Lower leg skin (tissue), 4 donors: ENCODE measurements at regions of chr14 and their contacts with region 1.

Region 1: GRCh38 chr14:62654641-62655040 is 390.6 kb downstream of the KCNH5 start:
- DNase-seq: no peak
- H3K4me3 ChIP-seq: no peak overlapping the region
- CTCF ChIP-seq: no peak
- POLR2A ChIP-seq: no peak

Region 2: DNA sequence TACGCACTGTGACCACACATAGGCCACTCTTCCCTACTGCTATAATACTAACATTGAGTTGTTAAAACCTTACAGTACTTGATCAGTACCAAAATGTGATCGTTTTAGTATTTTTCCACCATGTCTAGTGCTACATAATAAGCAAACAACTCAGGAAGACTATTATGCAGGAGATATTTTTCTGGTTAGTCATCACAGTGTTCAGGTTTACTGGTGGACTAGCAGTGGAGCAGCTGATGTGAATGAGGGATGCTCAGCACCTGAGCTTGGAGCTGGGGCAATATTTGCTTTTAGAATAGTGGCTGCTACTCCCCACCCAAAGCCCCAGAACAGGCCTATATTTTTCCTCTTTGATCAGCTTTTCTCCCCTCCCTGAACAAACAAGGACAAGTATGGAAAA is 122.5 kb before region 1 on chr14:
- intact Hi-C with region 1: no loop called
- DNase-seq: no peak
- H3K4me3 ChIP-seq: no peak overlapping the region
- CTCF ChIP-seq: no peak
- POLR2A ChIP-seq: no peak

Region 3: DNA sequence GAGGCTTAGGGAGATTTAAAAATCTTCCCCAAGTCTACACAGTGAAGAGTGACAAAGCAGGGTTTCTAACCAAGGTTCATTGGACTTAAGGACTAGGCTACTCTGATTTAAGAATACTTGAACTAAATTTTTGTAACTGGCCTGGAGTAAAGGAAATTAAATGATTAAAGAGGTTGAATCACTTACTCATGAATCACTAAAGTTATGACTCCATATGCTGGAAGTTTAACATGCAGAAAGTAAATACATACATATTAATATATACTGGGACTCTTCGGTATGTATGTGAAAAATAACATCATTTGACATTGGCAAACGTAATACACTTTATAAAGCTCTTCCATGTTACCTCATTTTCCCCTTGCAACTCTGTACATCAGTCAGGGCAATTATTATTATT is 67.8 kb after region 1 on chr14:
- intact Hi-C with region 1: loop called (anchors 2 kb)
- DNase-seq: no peak
- H3K4me3 ChIP-seq: no peak overlapping the region
- CTCF ChIP-seq: no peak
- POLR2A ChIP-seq: no peak